ENCODE measurements at regions of chr19 and their contacts with region 1.

Region 1: GRCh38 chr19:35162471-35163326 is 8.2 kb downstream of the FXYD5 start:
- DNase-seq: peak; percentile 88
- H3K4me3 Mint-ChIP-seq: peak overlapping the region; percentile 62
- H3K27ac Mint-ChIP-seq: peak overlapping the region; percentile 90
- H3K4me1 Mint-ChIP-seq: peaks cover 78% of the 10 kb centered on the region
- H3K27me3 Mint-ChIP-seq: no peaks in the 10 kb centered on the region
- CTCF ChIP-seq: no peak

Region 2: DNA sequence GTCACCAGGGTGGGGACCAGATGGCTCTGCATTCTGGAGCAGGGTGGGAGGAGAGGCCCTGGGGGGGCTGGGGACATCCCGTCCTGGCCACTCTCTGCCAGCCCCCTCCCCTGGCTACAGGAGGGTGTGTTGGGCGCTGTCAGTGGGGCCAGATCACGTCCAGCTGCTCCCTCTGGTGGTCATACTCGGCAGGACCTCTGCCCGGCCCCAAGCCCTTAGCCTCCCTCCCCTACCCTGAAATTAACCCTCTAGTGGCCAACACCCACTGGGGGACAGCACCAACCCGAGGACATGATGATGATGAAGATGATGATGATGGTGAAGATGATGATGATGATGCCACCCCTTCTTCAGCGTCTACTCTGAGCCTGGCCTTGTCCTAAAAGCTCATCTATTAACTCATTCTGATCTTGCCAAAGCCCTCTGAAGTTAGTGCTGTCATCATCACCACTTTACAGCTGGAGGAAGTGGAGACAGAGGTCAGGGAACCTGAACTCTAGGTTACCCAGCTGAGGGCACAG is 27.2 kb before region 1 on chr19:
- CTCF ChIA-PET with region 1: no interaction called
- intact Hi-C with region 1: no loop called
- DNase-seq: peak; percentile 89
- H3K4me3 Mint-ChIP-seq: no peak overlapping the region
- H3K27ac Mint-ChIP-seq: no peak overlapping the region
- H3K4me1 Mint-ChIP-seq: peaks cover 27% of the 10 kb centered on the region
- H3K27me3 Mint-ChIP-seq: no peaks in the 10 kb centered on the region
- CTCF ChIP-seq: peak; percentile 98

Region 3: DNA sequence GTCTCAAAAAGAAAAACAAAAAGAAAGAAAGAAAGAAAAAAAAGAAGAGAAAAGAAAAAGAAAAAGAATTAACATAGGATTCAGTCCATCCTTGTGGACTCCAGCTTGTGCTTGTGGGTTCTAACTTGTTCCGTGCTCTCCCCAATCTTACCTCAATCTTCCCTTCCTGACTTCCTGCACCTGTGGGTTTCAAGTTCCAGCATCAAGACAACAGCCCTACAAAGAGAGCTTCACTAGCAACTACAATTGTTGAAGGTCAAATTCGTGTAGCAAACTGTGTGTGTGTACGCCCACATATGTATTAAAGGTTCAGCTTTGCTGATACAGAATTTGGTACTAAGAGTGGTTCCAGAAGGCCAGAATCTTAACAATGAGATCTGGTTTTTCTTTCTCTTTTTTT is 17.1 kb after region 1 on chr19:
- CTCF ChIA-PET with region 1: no interaction called
- intact Hi-C with region 1: no loop called
- DNase-seq: no peak
- H3K4me3 Mint-ChIP-seq: no peak overlapping the region
- H3K27ac Mint-ChIP-seq: no peak overlapping the region
- H3K4me1 Mint-ChIP-seq: peaks cover 15% of the 10 kb centered on the region
- H3K27me3 Mint-ChIP-seq: no peaks in the 10 kb centered on the region
- CTCF ChIP-seq: no peak

Region 4: GRCh38 chr19:35195830-35196229 is 33.1 kb after region 1 on chr19:
- CTCF ChIA-PET with region 1: no interaction called
- intact Hi-C with region 1: no loop called
- DNase-seq: peak; percentile 17
- H3K4me3 Mint-ChIP-seq: no peak overlapping the region
- H3K27ac Mint-ChIP-seq: peak overlapping the region; percentile 37
- H3K4me1 Mint-ChIP-seq: peaks cover 27% of the 10 kb centered on the region
- H3K27me3 Mint-ChIP-seq: no peaks in the 10 kb centered on the region
- CTCF ChIP-seq: no peak

Region 5: DNA sequence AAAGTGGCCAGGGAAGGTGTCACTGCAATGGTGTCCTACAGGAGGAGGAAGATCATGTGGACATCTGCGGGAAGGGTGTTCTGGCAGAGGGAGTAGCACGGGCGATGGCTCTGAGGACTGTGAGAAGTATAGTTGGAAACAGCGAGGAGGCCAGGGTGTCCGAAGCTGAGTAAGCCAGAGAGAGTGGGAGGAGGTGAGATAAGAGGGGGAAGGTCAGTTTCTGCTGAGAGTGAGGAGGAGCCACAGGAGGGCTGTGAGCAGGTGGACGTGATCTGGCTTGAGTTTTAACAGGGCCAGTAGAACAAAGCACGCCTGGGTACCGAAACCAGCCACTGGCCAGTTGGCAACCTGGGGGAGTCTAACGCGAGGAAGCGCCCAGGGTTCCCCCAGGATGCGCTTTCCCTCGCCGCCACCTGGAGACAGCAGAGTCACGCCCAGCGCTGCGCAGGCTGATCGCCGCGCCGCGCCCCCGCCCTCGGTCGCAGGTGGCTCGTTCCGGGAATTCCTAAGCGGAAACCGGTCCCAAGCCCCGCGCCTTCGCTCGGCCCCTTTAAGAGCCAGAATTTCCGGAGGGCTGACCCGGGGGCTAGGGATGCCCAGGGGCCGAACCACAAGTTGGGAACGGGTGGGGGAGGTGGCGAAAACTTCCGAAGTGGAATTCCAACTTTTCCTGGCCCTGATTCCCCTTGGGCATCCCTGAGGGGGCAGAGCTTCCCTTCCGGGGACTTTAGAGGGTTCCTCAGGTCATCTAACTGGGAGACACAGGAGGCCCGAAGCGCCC is 85.0 kb after region 1 on chr19:
- CTCF ChIA-PET with region 1: no interaction called
- intact Hi-C with region 1: loop called (anchors 1 kb)
- DNase-seq: peak; percentile 97
- H3K4me3 Mint-ChIP-seq: peak overlapping the region; percentile 100
- H3K27ac Mint-ChIP-seq: peak overlapping the region; percentile 96
- H3K4me1 Mint-ChIP-seq: peaks cover 42% of the 10 kb centered on the region
- H3K27me3 Mint-ChIP-seq: no peaks in the 10 kb centered on the region
- CTCF ChIP-seq: peak; percentile 50